Activated CD8-positive, alpha-beta memory T cell treated with anti-CD3 and anti-CD28 coated beads, Interleukin-2, amount 10 ng/mL, durations not matched to agents 7 days and 5 days (primary cell): ENCODE measurements at regions of chr10 and their contacts with region 1.

Region 1: DNA sequence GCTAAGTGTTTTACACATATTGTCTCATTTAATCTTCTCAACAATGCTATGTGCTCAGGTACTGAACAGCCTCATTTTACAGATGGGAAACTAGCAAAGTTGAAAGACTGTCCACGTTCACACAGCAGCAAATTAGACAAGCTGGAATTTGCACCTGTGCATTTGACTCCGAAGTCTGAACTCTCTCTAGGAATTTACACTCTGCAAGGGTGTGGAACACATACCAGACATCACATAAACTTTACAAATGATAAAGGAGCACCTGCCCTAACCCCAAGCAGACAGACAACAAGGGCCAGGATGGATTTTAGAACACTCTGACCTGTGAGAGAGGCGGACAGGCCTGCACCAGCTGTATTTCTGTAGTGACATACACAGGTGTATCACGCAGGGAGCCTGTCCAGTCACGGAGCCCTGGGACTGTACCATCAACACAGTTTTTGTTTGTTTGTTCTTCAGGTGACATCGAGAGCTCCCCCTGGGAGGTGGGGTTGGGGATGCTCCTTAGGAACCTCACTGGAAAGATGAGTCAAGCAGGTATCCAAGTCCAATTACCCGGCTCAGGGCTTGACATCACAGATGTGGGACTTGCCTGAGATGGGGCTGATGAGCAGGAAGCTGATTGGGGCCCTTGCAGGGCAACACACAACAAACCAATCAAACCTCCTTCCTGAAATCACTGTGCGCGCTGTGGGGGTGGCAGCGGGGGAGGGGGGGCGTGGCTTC is 31.0 kb downstream of the MKI67 start:
- DNase-seq: peak; percentile 81
- ATAC-seq: peak; percentile 88
- H3K4me3 Mint-ChIP-seq: peak overlapping the region; percentile 47
- H3K27ac Mint-ChIP-seq: peak overlapping the region; percentile 76
- H3K4me1 Mint-ChIP-seq: peaks cover 43% of the 10 kb centered on the region
- H3K27me3 Mint-ChIP-seq: no peaks in the 10 kb centered on the region

Region 2: GRCh38 chr10:128000471-128001362 is 94.5 kb before region 1 on chr10:
- CTCF ChIA-PET with region 1: no interaction called
- DNase-seq: no peak
- ATAC-seq: no peak
- H3K4me3 Mint-ChIP-seq: no peak overlapping the region
- H3K27ac Mint-ChIP-seq: no peak overlapping the region
- H3K4me1 Mint-ChIP-seq: peaks cover 1% of the 10 kb centered on the region
- H3K27me3 Mint-ChIP-seq: peaks cover 53% of the 10 kb centered on the region

Region 3: DNA sequence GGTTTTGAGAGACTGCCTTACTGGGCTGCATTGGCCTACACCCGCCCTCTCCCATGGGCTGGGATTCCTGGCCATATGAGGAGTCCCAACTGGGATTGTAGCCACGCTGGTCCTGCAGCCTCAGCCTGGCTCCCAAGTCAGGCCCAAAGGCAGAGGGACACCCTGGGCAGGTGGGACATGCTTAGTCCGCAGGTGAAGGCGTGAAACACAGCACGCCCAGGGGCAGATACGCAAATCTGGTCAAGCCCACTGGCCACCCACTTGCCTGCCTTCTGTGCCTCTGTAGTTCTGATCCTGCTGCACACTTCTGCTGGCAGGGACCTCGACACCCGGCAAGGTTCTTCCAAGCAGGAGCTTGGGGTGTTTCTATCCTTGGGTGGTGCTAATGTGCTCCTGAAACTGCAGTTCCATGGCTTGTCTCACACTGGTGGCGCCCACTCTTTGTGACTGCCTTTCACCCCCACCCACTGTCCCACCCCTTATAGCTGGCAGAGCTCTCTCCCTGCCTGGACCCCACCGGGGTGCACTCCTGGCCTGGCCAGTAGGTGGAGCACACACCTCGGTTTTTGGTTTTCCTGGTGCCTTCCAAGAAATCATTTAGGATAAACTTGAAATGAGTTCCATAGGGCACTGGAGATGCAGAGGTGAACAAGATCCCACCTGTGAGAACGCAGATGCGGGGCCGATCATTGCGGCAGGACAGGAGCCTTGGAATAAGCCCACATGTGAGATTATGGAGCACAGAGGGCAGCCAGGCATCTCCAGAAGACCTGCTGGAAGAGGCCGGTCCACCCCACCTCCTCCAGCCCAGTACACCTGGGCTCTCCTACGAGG is 16.8 kb before region 1 on chr10:
- CTCF ChIA-PET with region 1: interaction called, 15 read pairs
- DNase-seq: peak; percentile 61
- ATAC-seq: peak; percentile 75
- H3K4me3 Mint-ChIP-seq: no peak overlapping the region
- H3K27ac Mint-ChIP-seq: no peak overlapping the region
- H3K4me1 Mint-ChIP-seq: peaks cover 13% of the 10 kb centered on the region
- H3K27me3 Mint-ChIP-seq: no peaks in the 10 kb centered on the region

Region 4: DNA sequence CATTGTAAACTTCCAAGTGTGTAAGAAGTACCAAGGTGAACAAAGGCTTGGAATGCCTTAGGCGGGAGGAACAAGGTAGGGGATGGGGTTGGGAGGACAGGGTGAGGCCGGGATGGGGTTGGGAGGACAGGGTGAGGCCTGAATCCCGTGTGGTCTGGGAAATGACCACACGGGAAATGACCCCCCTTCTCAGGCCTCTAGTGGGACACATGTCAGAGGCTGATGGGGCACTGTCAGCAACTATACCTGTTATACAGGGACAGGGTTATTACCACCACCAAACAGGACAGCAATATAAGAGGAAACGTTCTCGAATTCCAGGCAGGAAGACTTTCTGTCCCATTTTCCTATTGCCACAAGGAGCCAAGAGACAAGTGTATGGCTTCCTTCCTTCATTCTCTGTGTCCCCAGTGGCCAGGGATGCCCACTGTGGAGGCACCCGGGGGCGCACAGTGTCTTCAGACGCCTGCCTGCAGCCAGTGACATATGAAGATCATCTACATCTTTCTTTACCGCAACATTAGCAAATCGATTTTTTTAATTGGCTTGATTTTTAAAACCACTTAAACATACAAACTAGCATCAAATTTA is 29.7 kb after region 1 on chr10:
- CTCF ChIA-PET with region 1: interaction called, 11 read pairs
- DNase-seq: no peak
- ATAC-seq: no peak
- H3K4me3 Mint-ChIP-seq: peak overlapping the region; percentile 98
- H3K27ac Mint-ChIP-seq: peak overlapping the region; percentile 93
- H3K4me1 Mint-ChIP-seq: peaks cover 49% of the 10 kb centered on the region
- H3K27me3 Mint-ChIP-seq: peaks cover 3% of the 10 kb centered on the region

Region 5: GRCh38 chr10:128230401-128230800 is 135.2 kb after region 1 on chr10:
- CTCF ChIA-PET with region 1: no interaction called
- DNase-seq: no peak
- ATAC-seq: no peak
- H3K4me3 Mint-ChIP-seq: no peak overlapping the region
- H3K27ac Mint-ChIP-seq: no peak overlapping the region
- H3K4me1 Mint-ChIP-seq: no peaks in the 10 kb centered on the region
- H3K27me3 Mint-ChIP-seq: peaks cover 26% of the 10 kb centered on the region